ENCODE measurements at regions of chr2 and their contacts with region 1.

Region 1: DNA sequence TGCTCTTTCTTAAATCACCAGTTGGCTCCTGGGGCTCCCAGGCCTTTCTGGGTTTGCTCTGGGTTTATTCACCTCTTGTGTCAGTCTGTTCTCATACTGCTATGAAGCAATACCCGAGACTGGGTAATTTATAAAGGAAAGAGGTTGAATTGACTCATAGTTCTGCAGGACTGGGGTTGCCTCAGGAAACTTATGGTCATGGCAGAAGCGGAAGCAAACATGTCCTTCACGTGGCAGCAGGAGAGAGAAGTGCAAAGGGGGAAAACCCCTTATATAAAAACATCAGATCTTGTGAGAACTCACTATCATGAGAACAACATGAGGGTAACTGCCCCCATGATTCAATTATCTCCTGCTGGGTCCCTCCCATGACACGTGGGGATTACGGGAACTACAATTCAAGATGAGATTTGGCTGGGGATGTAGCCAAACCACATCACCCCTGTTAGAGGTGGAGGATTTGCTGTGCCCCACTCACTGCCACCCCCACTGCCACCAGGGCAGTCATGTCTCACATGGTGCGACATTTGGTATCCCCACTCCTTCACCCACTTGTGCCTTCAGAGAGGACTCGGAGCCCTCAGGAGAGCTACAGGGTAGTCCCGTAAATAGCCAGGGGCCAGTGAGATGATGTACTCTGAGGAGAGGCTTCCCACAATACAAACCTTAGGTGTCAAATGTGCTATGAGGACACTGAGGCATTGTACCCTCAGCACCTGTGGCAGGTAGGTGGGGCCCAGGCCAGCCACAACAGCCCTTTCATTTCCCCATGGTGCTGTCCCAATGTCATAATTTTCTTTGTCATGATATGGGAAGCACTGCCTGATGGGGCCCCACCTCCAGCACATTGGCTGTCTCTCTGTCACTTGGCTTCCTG is 35.7 kb downstream of the CDC42EP3 start:
- DNase-seq: peak; percentile 78

Region 2: GRCh38 chr2:37526321-37526720 is 109.4 kb before region 1 on chr2:
- intact Hi-C with region 1: loop called (anchors 5 kb)
- DNase-seq: no peak

Region 3: DNA sequence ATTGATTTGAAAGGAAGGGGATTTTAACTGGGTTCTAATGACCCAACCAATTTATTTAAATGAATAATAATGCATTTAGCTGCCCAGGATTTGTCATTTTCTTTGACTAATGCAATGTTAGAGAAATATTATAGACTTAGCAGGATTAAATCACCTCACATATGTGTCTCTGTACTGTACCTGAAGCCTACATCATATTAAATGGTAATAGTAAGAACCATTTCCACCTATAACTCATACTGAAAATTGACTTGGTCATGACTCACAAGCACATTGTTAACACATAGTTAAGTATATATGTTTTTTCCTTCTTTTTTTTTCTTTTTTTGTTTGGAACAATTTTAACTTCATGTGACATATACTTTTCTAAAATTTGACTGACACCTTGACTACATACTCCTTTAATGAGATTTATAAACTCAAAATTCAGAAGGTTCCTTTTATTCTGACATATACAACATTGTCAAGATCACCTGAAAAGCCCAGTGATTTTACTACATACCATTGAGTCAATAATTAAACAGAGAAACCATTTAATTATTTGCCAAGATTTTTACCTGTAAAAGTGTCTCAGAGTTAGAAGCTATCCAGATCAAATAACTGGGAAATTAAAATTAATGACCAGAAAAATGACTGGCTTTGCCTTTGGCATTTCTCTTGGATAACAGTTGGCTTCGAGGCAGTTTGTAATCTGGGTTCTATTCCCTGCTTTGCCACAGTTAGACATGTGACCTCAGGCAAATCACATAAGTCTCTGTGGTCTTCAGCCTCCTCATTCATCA is 94.5 kb after region 1 on chr2:
- intact Hi-C with region 1: no loop called
- DNase-seq: no peak

Region 4: GRCh38 chr2:37925063-37925897 is 289.5 kb after region 1 on chr2 and contains the start of gene RMDN2:
- intact Hi-C with region 1: no loop called
- DNase-seq: peak; percentile 96
- total RNA-seq, gene RMDN2: 4.8 TPM